B cell (primary cell): ENCODE measurements at regions of chr5 and their contacts with region 1.

Region 1: DNA sequence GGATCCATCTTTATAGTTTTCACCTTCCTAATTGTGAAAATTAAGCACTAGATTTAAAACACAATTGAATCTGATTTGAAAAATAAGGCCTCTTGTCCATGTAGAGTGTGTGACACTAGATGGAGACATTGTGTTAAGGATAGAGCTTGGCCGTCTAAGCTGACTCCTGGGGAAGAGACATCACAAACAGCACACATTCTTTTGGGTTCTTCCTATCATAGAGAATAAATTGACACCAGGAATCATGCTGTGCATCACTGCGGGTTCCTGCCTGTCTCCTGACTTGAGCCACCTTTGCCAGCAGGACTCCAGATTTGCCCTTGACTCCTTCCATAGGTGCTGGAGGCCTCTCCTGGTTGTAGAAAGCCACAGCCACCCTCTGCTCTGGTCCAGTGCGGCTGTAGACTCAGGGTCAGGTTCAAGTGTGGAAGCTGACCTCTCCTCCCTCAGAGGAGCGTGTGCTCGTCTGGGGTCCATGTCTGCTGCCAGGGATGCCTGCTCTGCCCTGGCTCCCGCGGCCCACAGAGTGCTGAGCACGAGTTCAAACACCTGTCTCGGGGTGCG is 11.2 kb downstream of the ROPN1L start:
- DNase-seq: peak; percentile 83
- ATAC-seq: peak; percentile 86
- H3K4me3 ChIP-seq: no peak overlapping the region
- H3K4me3 Mint-ChIP-seq: no peak overlapping the region
- H3K27ac ChIP-seq: no peak overlapping the region
- H3K27ac Mint-ChIP-seq: no peak overlapping the region
- H3K4me1 ChIP-seq: no peaks in the 10 kb centered on the region
- H3K4me1 Mint-ChIP-seq: no peaks in the 10 kb centered on the region
- H3K27me3 ChIP-seq: no peaks in the 10 kb centered on the region
- H3K27me3 Mint-ChIP-seq: no peaks in the 10 kb centered on the region
- CTCF ChIP-seq: peak; percentile 85

Region 2: DNA sequence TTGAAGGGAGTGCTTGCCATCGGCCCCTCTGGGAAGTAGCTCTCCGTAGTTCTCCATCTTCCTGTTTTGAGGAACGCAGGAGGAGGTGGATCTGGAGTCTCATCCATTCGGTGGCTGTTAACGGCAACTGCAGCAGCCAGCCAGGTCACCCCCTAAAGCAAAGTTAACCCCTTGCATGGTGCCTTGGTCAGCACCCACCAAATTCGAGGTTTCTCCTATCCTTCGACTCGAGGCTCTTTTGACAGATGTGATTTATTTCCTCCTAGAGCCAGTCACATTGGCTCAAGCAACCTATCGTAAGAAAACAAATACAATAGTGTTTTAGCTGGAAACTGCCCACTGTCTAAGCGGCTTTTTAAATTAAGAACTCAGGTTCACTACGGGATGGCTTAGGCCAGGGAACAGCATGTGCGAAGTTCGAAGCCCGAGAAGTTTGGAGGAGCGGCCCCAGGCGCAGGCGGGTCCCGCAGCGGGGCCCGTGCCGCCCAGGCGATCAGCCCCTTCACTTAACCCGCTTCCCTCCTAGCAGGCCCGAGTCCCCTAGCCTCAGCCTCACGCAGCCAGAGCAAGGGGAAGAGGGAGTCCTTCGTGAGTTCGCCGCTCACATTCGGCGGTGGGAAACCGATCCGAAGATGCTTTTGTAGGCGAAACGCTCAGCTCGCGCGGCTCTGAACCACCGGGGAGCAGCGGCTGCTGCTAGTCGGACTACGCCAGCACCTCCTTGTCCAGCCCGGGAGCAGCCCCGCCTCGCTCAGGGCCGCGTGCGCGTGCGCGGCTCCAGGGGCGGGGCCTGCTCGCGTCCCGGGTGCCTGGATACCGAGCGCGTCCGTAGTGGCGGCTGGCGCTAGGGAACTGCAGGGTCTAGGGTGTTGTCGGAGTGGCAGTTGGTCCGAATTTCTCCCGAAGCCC is 11.5 kb before region 1 on chr5 and contains the start of gene ROPN1L:
- CTCF ChIA-PET with region 1: interaction called, 24 read pairs
- POLR2A ChIA-PET with region 1: no interaction called
- intact Hi-C with region 1: no loop called
- DNase-seq: peak; percentile 86
- ATAC-seq: peak; percentile 95
- H3K4me3 ChIP-seq: peak within 1 kb of the TSS; percentile 66 to 85 (median 70)
- H3K4me3 Mint-ChIP-seq: peak within 1 kb of the TSS; percentile 93
- H3K27ac ChIP-seq: no peak within 1 kb of the TSS
- H3K27ac Mint-ChIP-seq: peak within 1 kb of the TSS; percentile 59
- H3K4me1 ChIP-seq: peaks cover 27 to 41% of the 10 kb centered on the region in 2 donors
- H3K4me1 Mint-ChIP-seq: peaks cover 35% of the 10 kb centered on the region
- H3K27me3 ChIP-seq: peaks cover 0 to 5% (median 0%) of the 10 kb centered on the region in 4 experiments
- H3K27me3 Mint-ChIP-seq: peaks cover 4% of the 10 kb centered on the region
- CTCF ChIP-seq: no peak
- total RNA-seq, gene ROPN1L: 0.34 and 0.91 TPM in 2 replicates

Region 3: DNA sequence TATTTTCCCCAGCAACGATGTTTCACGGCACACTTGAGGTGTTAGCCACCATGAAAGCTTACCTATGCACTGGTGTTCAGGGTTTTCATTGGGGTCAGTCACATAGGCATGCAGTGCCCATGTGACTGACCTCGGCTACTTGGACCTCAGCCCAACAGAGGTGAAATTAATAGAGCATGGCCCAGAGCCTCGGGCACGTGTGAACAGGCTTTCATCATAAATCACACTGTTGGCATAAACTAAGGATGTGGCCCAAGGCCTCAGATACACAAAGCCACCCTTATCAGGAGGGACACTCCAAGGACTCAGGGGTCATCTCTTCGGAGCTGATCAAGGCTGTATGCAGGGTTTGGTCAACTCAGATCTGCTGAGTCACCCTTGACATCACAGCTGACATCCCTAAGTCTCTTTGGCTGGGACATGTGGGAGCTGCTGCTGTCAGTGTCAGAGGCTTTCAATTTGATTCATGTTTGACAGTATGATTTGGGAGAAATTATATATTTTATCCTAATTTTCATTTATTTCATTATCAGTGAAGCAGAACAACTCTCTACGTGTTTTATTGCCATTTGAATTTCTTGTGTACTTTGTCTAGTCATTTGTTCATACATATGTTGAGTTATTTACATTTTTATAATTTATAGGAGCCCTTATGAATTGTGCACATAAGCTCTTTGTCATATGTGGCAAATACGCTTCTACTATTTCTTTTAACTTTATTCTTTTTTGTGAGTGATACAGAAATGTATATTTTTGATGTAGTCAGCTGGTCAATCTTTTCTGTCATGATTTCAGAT is 51.3 kb after region 1 on chr5:
- CTCF ChIA-PET with region 1: no interaction called
- POLR2A ChIA-PET with region 1: no interaction called
- intact Hi-C with region 1: no loop called
- DNase-seq: no peak
- ATAC-seq: no peak
- H3K4me3 ChIP-seq: no peak overlapping the region
- H3K4me3 Mint-ChIP-seq: no peak overlapping the region
- H3K27ac ChIP-seq: no peak overlapping the region
- H3K27ac Mint-ChIP-seq: no peak overlapping the region
- H3K4me1 ChIP-seq: peaks cover 15 to 16% of the 10 kb centered on the region in 2 donors
- H3K4me1 Mint-ChIP-seq: peaks cover 19% of the 10 kb centered on the region
- H3K27me3 ChIP-seq: no peaks in the 10 kb centered on the region
- H3K27me3 Mint-ChIP-seq: no peaks in the 10 kb centered on the region
- CTCF ChIP-seq: no peak

Region 4: DNA sequence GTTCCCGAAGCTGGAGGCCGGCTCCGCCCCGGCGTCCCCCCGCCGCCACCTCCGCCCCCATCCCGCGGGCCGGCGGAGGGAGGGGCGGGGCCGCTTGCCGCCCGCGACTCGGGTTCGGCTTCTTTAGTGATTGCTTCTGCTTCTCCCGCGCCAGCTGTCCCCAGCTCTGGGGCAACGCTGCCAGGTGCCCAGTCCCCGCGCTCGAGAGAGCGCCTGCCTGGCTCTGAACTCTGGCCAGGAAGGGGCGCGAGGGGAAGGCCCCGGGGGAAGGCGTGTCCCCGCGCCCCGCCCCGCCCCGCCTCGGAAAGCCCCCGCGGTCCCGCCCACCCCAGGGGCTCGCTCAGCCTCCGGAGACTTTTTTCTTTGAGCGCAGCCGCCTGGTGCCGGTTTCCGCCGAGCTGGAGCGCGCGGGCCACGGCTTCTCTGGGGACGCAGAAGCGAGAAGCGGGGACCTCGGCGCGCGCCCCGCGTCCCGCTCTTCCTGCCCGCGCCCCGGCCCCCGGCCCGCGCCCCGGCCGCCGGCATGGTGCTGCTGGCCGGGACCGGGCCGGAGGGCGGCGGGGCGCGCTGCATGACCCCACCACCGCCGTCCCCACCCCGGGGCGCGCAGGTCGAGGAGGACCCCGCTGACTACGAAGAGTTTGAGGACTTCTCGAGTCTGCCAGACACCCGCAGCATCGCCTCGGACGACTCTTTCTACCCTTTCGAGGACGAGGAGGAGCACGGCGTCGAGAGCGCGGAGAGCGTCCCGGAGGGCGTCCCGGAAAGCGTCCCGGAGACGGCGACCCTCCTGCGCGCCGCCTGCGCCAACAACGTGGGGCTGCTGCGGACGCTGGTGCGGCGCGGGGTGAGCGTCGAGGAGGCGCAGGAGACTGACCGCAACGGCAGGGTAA is 111.3 kb after region 1 on chr5 and contains the start of gene ANKRD33B:
- CTCF ChIA-PET with region 1: interaction called, 18 read pairs
- POLR2A ChIA-PET with region 1: no interaction called
- intact Hi-C with region 1: no loop called
- DNase-seq: peak; percentile 91
- ATAC-seq: peak; percentile 74
- H3K4me3 ChIP-seq: peak within 1 kb of the TSS; percentile 64 to 84 (median 75)
- H3K4me3 Mint-ChIP-seq: peak within 1 kb of the TSS; percentile 93
- H3K27ac ChIP-seq: peak within 1 kb of the TSS; percentile 76 to 96
- H3K27ac Mint-ChIP-seq: peak within 1 kb of the TSS; percentile 90
- H3K4me1 ChIP-seq: peaks cover 42 to 51% of the 10 kb centered on the region in 2 donors
- H3K4me1 Mint-ChIP-seq: peaks cover 61% of the 10 kb centered on the region
- H3K27me3 ChIP-seq: no peaks in the 10 kb centered on the region
- H3K27me3 Mint-ChIP-seq: no peaks in the 10 kb centered on the region
- CTCF ChIP-seq: no peak
- total RNA-seq, gene ANKRD33B: 23.4 and 24.8 TPM in 2 replicates

Region 5: DNA sequence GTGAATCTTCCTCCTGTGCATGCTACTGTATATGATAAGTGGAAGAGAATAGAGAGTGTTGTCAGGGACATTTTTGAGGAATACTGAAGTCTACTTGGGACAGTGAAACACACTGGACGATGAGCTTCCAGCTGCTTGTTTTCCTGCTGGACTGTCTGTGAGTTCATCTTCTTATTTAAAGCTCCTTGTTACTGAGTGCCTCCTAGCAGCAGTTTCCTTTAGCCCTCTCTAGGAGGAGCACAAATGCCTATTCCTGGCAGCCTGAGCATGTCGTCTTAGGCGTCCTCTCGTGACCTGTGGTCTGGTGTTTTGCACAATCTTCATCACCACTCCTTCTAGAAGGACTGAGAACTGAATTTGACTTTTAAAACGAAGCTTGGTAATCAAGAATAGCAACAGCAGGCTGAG is 154.8 kb after region 1 on chr5:
- CTCF ChIA-PET with region 1: interaction called, 18 read pairs
- POLR2A ChIA-PET with region 1: no interaction called
- intact Hi-C with region 1: no loop called
- DNase-seq: peak; percentile 76
- ATAC-seq: peak; percentile 26
- H3K4me3 ChIP-seq: peak overlapping the region in 4 of 5 experiments; percentile 23 to 59 (median 40)
- H3K4me3 Mint-ChIP-seq: peak overlapping the region; percentile 82
- H3K27ac ChIP-seq: peak overlapping the region; percentile 45 to 73
- H3K27ac Mint-ChIP-seq: peak overlapping the region; percentile 86
- H3K4me1 ChIP-seq: peaks cover 25 to 30% of the 10 kb centered on the region in 2 donors
- H3K4me1 Mint-ChIP-seq: peaks cover 49% of the 10 kb centered on the region
- H3K27me3 ChIP-seq: no peaks in the 10 kb centered on the region
- H3K27me3 Mint-ChIP-seq: no peaks in the 10 kb centered on the region
- CTCF ChIP-seq: no peak

Region 6: DNA sequence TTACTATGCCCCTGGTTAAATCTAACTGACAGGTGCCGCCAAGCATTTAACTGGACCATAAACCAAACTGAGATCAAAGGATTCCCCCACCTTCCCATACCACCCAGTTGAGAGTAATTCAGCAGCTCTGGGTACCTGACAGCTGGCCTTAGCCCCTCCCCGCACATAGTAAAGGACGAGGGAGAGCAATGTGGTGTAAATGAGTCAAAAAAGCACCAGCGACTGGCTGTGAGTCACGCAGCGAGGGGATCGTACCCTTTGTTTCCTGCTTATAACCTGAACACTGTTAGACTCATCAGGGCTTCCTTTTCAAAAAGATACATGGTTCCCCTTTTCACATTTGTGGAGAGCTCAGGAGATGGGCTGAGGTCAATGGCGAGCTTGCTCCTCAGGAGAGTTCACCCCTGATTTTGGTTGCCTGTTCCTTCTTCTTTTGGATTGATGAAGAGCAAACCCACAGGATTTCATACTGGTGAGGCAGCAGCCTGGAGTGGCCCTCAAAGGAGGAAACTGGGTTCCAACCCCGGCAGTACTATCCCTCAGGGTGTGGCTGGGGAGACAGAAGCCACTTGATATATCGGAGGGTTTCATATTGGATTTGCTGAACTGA is 182.5 kb after region 1 on chr5:
- CTCF ChIA-PET with region 1: interaction called, 326 read pairs
- POLR2A ChIA-PET with region 1: no interaction called
- intact Hi-C with region 1: no loop called
- DNase-seq: peak; percentile 81
- ATAC-seq: peak; percentile 60
- H3K4me3 ChIP-seq: peak overlapping the region in 2 of 5 experiments; percentile 5 to 33
- H3K4me3 Mint-ChIP-seq: peak overlapping the region; percentile 78
- H3K27ac ChIP-seq: peak overlapping the region; percentile 65 to 95
- H3K27ac Mint-ChIP-seq: peak overlapping the region; percentile 99
- H3K4me1 ChIP-seq: peaks cover 58 to 68% of the 10 kb centered on the region in 2 donors
- H3K4me1 Mint-ChIP-seq: peaks cover 66% of the 10 kb centered on the region
- H3K27me3 ChIP-seq: no peaks in the 10 kb centered on the region
- H3K27me3 Mint-ChIP-seq: no peaks in the 10 kb centered on the region
- CTCF ChIP-seq: no peak

Region 7: GRCh38 chr5:10695055-10695649 is 242.3 kb after region 1 on chr5:
- CTCF ChIA-PET with region 1: interaction called, 31 read pairs
- POLR2A ChIA-PET with region 1: no interaction called
- intact Hi-C with region 1: no loop called
- DNase-seq: peak; percentile 59
- ATAC-seq: peak; percentile 26
- H3K4me3 ChIP-seq: no peak overlapping the region
- H3K4me3 Mint-ChIP-seq: no peak overlapping the region
- H3K27ac ChIP-seq: no peak overlapping the region
- H3K27ac Mint-ChIP-seq: peak overlapping the region; percentile 21
- H3K4me1 ChIP-seq: peaks cover 7 to 21% of the 10 kb centered on the region in 2 donors
- H3K4me1 Mint-ChIP-seq: peaks cover 23% of the 10 kb centered on the region
- H3K27me3 ChIP-seq: no peaks in the 10 kb centered on the region
- H3K27me3 Mint-ChIP-seq: no peaks in the 10 kb centered on the region
- CTCF ChIP-seq: peak; percentile 71

Region 8: GRCh38 chr5:10863763-10864383 is 411.0 kb after region 1 on chr5:
- CTCF ChIA-PET with region 1: no interaction called
- POLR2A ChIA-PET with region 1: no interaction called
- intact Hi-C with region 1: loop called (anchors 2 kb)
- DNase-seq: peak; percentile 58
- ATAC-seq: peak; percentile 54
- H3K4me3 ChIP-seq: no peak overlapping the region
- H3K4me3 Mint-ChIP-seq: no peak overlapping the region
- H3K27ac ChIP-seq: no peak overlapping the region
- H3K27ac Mint-ChIP-seq: no peak overlapping the region
- H3K4me1 ChIP-seq: no peaks in the 10 kb centered on the region
- H3K4me1 Mint-ChIP-seq: peaks cover 2% of the 10 kb centered on the region
- H3K27me3 ChIP-seq: peaks cover 0 to 6% (median 0%) of the 10 kb centered on the region in 4 experiments
- H3K27me3 Mint-ChIP-seq: peaks cover 14% of the 10 kb centered on the region
- CTCF ChIP-seq: peak; percentile 78